PC-3 (cell line): ENCODE measurements at regions of chr15 and their contacts with region 1.

Region 1: DNA sequence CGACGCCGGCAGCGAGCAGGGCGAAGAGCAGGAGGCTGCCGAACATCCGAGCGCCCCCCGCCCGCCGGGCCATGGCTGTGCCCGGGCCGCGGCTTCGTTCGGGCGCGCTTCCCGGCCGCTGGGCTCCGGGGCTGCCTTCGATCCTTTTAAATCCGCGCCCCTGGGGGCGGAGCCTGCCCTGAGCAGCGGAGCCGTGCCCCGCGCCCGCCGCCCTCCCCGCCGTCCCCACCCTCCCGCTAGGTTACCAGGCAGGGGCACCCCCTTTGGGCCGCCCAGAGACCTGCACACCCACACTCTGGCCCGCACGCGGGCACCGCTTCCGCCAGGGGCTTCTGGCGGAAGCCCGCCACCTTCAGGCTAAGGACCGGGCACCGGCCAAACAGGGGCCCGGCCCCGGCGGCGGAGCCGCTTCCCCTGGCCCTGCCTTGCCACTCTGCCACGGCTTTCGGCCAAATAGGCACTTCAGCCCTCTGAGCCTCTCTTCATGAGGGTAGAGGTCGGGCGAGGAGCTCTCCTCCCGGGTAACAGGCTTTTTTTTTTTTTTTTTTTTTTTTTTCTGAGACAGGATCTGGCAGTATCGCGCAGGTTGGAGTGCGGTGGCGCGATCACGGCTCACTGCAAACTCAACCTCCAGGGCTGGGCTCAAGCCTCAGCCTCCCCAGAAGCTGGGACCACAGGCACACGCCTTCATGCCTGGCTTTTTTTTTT is at the start of gene NMB:
- DNase-seq: peak; percentile 73
- ATAC-seq: peak; percentile 53
- H3K4me3 ChIP-seq: peak within 1 kb of the TSS; percentile 69
- H3K27ac ChIP-seq: peak within 1 kb of the TSS; percentile 44
- H3K4me1 ChIP-seq: peaks cover 21% of the 10 kb centered on the region
- H3K27me3 ChIP-seq: no peaks in the 10 kb centered on the region
- CTCF ChIP-seq: peak; percentile 51; the same call in 1 of the 2 replicates
- total RNA-seq, gene NMB: 20.4 and 25.9 TPM in 2 replicates

Region 2: DNA sequence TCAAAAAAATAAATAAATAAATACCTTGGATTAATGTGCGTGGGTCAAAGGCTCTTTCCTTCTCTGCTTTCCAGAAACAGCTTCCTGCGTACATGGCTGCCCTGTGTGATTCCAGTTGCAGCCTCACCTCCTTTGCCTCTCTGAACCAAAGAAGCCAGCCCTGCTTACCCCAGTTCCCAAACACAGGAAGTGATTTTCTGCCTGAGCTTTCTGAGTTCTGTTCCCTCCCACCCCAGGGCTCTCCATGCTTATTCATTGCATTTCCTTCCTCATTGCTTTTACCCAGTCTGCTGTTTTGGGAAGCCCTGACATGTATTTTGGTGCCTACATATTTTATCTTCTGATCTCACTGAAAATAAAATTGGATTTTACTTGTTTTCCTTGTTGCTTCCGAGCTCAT is 42.0 kb before region 1 on chr15:
- CTCF ChIA-PET with region 1: no interaction called
- POLR2A ChIA-PET with region 1: interaction called, 20 read pairs
- intact Hi-C with region 1: no loop called
- DNase-seq: no peak
- ATAC-seq: no peak
- H3K4me3 ChIP-seq: no peak overlapping the region
- H3K27ac ChIP-seq: no peak overlapping the region
- H3K4me1 ChIP-seq: no peaks in the 10 kb centered on the region
- H3K27me3 ChIP-seq: no peaks in the 10 kb centered on the region
- CTCF ChIP-seq: no peak

Region 3: DNA sequence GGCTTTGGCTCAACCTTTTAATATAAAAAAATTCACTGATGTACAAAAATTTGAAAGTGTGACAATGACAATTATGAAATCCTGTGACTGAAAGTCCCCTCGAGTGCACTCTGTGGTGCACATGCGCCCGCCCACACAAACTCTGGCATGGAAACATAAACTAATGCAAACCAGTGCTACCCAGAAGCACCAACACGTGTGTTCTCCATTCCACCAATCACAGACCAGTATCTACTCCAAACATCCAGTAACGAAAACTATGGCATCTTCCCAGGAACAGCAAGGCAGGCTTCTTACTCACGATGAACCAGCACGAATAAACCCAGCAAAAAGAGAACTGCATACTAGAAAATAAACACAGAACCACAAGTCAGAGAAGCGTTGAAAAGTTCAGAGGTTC is 11.5 kb after region 1 on chr15:
- CTCF ChIA-PET with region 1: interaction called, 10 read pairs
- POLR2A ChIA-PET with region 1: no interaction called
- intact Hi-C with region 1: no loop called
- DNase-seq: no peak
- ATAC-seq: no peak
- H3K4me3 ChIP-seq: no peak overlapping the region
- H3K27ac ChIP-seq: peak overlapping the region; percentile 42
- H3K4me1 ChIP-seq: peaks cover 13% of the 10 kb centered on the region
- H3K27me3 ChIP-seq: no peaks in the 10 kb centered on the region
- CTCF ChIP-seq: no peak

Region 4: GRCh38 chr15:84748274-84749110 is 90.3 kb after region 1 on chr15 and contains the start of gene ZNF592:
- CTCF ChIA-PET with region 1: no interaction called
- POLR2A ChIA-PET with region 1: no interaction called
- intact Hi-C with region 1: loop called (anchors 1 kb)
- DNase-seq: peak; percentile 79
- ATAC-seq: peak; percentile 66
- H3K4me3 ChIP-seq: peak within 1 kb of the TSS; percentile 96
- H3K27ac ChIP-seq: peak within 1 kb of the TSS; percentile 88
- H3K4me1 ChIP-seq: peaks cover 37% of the 10 kb centered on the region
- H3K27me3 ChIP-seq: no peaks in the 10 kb centered on the region
- CTCF ChIP-seq: no peak
- total RNA-seq, gene ZNF592: 12.3 and 13.0 TPM in 2 replicates

Region 5: GRCh38 chr15:84785053-84785452 is 126.8 kb after region 1 on chr15:
- CTCF ChIA-PET with region 1: no interaction called
- POLR2A ChIA-PET with region 1: interaction called, 10 read pairs
- intact Hi-C with region 1: no loop called
- DNase-seq: no peak
- ATAC-seq: no peak
- H3K4me3 ChIP-seq: no peak overlapping the region
- H3K27ac ChIP-seq: no peak overlapping the region
- H3K4me1 ChIP-seq: no peaks in the 10 kb centered on the region
- H3K27me3 ChIP-seq: no peaks in the 10 kb centered on the region
- CTCF ChIP-seq: no peak

Region 6: DNA sequence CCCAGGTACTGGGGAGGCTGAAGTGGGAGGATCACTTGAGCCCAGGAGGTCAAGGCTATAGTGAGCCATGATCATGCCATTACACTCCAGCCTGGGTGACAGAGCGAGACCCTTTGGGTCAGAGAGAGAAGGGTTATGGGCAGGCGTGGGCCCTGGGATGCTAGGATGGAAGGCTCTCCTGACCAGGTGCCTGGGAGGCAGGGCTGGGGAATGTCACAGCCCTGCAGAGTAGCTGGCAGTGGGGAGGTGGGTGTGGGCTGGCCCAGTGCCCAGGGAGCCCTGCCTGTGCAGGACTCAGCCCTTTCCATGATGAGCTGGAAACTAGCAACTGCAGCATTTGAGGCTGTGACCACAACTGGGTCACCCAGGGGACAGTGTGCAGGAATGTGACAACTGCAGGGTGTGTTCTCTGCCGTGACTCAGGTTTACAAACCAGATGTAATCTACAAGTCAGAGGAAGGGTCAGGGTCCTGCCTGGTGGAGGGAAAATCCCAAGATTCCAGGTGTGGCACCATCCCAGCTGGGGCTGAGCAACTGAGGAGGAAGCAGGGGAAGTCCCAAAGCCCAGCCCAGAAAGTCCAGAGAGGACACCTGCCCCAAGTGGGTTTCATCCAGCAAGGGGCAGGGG is 271.6 kb after region 1 on chr15:
- CTCF ChIA-PET with region 1: interaction called, 9 read pairs
- POLR2A ChIA-PET with region 1: interaction called, 3 read pairs
- intact Hi-C with region 1: loop called (anchors 1 kb)
- DNase-seq: peak; percentile 99
- ATAC-seq: peak; percentile 88
- H3K4me3 ChIP-seq: no peak overlapping the region
- H3K27ac ChIP-seq: peak overlapping the region; percentile 87
- H3K4me1 ChIP-seq: peaks cover 42% of the 10 kb centered on the region
- H3K27me3 ChIP-seq: no peaks in the 10 kb centered on the region
- CTCF ChIP-seq: no peak